ENCODE measurements at regions of chr15 and their contacts with region 1.

Region 1: DNA sequence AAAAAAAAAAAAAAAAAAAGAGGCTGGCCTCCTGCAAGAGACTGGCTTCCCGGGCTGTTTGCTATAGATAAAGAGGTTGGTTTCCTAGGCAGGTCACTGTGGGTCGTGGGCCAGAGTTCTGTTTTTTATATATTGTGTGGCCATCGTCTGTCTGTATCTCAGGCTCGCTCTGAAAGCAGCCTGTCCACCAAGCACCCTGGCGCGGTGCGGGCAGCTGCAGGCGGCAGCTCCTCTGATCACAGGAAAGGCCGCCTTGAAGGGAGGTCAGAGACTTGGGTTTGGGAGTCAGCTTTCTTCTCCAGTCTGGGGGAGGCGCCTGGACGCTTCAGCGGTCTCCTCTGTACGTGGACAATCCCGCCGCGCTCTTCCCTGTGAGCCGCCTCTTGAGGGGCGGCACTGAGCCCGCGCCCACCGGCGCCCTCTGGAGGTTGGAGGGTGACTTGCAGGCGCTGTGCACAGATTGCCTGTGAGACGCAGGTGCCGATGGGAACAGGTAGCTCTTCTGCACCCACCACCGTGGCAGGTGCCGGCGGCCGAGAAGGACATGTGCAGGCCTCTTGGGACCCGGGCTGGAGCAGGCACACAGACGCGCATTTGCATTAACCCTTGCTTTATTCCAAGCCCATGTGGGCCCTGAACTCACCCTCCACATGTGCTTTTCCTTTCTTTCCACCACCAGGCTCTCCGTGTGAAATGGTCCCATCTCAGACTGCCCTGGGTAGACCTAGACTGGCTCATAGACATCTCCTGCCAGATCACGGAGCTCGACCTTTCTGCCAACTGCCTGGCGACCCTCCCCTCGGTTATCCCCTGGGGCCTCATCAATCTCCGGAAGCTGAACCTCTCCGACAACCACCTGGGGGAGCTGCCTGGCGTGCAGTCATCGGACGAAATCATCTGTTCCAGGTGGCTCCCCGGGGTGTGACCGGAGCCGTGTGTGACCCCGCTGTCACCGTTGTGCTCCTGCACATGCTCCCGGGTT is 89.3 kb downstream of the LRRK1 start:
- DNase-seq: no peak
- H3K4me3 ChIP-seq: peak overlapping the region; percentile 54
- H3K27ac ChIP-seq: no peak overlapping the region
- H3K27me3 ChIP-seq: no peaks in the 10 kb centered on the region
- CTCF ChIP-seq: peak; percentile 97

Region 2: GRCh38 chr15:100627789-100628395 is 380.6 kb before region 1 on chr15:
- CTCF ChIA-PET with region 1: interaction called, 52 read pairs
- POLR2A ChIA-PET with region 1: no interaction called
- DNase-seq: peak; percentile 56
- H3K4me3 ChIP-seq: no peak overlapping the region
- H3K27ac ChIP-seq: no peak overlapping the region
- H3K27me3 ChIP-seq: no peaks in the 10 kb centered on the region
- CTCF ChIP-seq: peak; percentile 78

Region 3: GRCh38 chr15:100873029-100873677 is 135.3 kb before region 1 on chr15:
- CTCF ChIA-PET with region 1: interaction called, 49 read pairs
- POLR2A ChIA-PET with region 1: no interaction called
- DNase-seq: peak; percentile 72
- H3K4me3 ChIP-seq: no peak overlapping the region
- H3K27ac ChIP-seq: no peak overlapping the region
- H3K27me3 ChIP-seq: peaks cover 7% of the 10 kb centered on the region
- CTCF ChIP-seq: peak; percentile 95

Region 4: DNA sequence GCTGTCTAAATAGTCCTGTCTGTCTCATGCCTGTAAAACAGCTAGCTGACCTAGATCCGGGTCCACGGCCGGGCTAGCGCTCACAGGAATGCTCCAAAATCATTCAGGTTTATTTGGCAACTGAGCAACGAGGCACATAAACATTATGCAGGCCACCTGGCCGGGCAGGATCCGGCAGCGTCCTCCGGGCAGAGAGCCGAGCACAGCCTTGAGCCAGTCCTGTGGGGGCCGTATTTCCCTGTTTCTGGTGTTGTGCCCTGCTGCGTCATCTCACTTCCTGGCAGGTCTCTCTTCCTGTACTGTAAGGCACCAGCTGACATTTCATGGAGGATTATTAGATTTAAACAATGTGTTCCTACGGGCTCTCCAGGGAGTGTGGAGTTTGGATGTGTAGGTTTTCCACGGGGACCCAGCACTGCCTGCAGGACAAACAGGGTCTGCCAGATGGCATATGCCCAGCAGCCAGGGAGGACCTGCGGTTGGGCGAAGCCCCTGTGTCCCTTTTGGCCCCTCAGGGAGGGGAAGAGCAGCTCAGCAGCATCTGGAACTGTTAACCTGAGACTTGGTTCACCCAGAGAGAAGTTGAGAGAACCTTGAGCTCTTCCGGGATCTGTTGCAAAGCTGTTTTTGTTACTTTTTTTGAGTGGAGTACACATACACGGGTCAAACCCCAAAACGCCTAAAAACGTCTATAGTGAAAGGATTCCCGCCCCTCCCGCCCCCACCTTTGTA is 105.8 kb before region 1 on chr15:
- CTCF ChIA-PET with region 1: interaction called, 11 read pairs
- POLR2A ChIA-PET with region 1: no interaction called
- DNase-seq: peak; percentile 69
- H3K4me3 ChIP-seq: peak overlapping the region; percentile 31; the same call in 1 of the 2 replicates
- H3K27ac ChIP-seq: peak overlapping the region; percentile 95
- H3K27me3 ChIP-seq: no peaks in the 10 kb centered on the region
- CTCF ChIP-seq: no peak

Region 5: DNA sequence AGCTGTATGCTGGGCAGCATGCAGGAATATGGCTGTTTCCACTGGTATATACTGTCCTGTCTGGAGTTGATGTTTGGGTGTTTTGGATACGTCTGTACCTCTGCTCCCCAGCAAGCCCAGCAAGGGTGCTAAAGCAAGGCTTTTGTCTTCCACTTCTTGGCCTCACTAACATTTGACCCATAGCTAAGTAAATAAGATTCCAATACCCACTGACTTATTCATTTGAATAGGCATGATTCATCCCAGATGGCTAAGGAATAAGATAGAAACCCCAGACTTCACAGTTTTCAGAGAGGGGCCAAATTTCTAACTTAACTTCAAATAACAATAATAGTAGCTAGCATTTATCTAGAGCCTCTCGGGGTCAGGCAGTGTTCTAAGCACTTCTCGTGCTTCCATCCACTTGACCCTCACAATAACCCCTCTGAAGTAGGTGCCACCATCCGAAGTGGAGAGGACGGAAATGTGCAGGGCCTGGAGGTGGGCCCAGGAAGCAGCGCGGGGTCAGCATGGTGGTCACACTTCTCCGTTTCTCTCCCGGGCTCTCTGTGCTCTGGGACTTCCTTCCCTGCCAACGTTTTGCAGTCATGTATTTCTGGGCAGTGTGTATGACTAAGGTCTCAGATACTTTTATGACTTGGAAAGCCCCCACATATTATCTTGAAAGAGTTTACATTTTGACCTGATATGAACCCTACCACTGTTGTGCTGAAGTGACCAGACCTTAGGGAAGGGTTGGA is 50.0 kb before region 1 on chr15:
- CTCF ChIA-PET with region 1: interaction called, 13 read pairs
- POLR2A ChIA-PET with region 1: no interaction called
- DNase-seq: no peak
- H3K4me3 ChIP-seq: no peak overlapping the region
- H3K27ac ChIP-seq: peak overlapping the region; percentile 83
- H3K27me3 ChIP-seq: no peaks in the 10 kb centered on the region
- CTCF ChIP-seq: no peak

Region 6: GRCh38 chr15:101217483-101217882 is 209.0 kb after region 1 on chr15:
- CTCF ChIA-PET with region 1: no interaction called
- POLR2A ChIA-PET with region 1: no interaction called
- DNase-seq: no peak
- H3K4me3 ChIP-seq: no peak overlapping the region
- H3K27ac ChIP-seq: no peak overlapping the region
- H3K27me3 ChIP-seq: no peaks in the 10 kb centered on the region
- CTCF ChIP-seq: no peak

Region 7: GRCh38 chr15:101251830-101252820 is 243.7 kb after region 1 on chr15 and contains the start of gene CHSY1:
- CTCF ChIA-PET with region 1: interaction called, 28 read pairs
- POLR2A ChIA-PET with region 1: no interaction called
- DNase-seq: peak; percentile 81
- H3K4me3 ChIP-seq: peak within 1 kb of the TSS; percentile 88
- H3K27ac ChIP-seq: peak within 1 kb of the TSS; percentile 65
- H3K27me3 ChIP-seq: no peaks in the 10 kb centered on the region
- CTCF ChIP-seq: no peak
- polyA plus RNA-seq, gene CHSY1: 44.6 and 49.2 TPM in 2 replicates